Calu3 (cell line): ENCODE measurements at regions of chr12 and their contacts with region 1.

Region 1: DNA sequence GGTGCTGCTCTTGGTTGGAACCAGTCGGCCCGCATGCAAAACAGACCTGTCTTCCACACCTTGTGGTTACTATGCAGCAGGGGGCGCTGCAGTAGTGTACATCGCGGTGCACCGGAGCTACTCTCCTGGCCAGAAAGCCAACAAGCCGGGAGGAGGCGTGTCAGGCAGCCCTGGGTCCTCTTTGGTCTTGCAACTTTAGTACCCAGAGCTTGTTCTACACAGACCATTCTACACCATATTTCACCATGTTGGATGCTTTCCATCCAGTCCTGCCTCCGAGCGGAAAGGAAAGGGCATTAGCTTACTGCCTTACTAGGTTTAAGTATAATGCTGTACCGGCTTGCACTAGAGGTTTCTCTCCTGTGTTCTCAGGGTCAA is 927 bp upstream of the TMTC2 start:
- DNase-seq: peak; percentile 97
- H3K4me3 Mint-ChIP-seq: peak overlapping the region; percentile 89
- H3K27ac Mint-ChIP-seq: peak overlapping the region; percentile 97
- H3K4me1 Mint-ChIP-seq: peaks cover 51% of the 10 kb centered on the region
- H3K27me3 Mint-ChIP-seq: no peaks in the 10 kb centered on the region
- CTCF ChIP-seq: peak; percentile 82

Region 2: GRCh38 chr12:82527165-82527780 is 158.5 kb before region 1 on chr12:
- CTCF ChIA-PET with region 1: interaction called, 9 read pairs
- intact Hi-C with region 1: loop called (anchors 1 kb)
- DNase-seq: peak; percentile 62
- H3K4me3 Mint-ChIP-seq: no peak overlapping the region
- H3K27ac Mint-ChIP-seq: no peak overlapping the region
- H3K4me1 Mint-ChIP-seq: peaks cover 18% of the 10 kb centered on the region
- H3K27me3 Mint-ChIP-seq: no peaks in the 10 kb centered on the region
- CTCF ChIP-seq: peak; percentile 36

Region 3: DNA sequence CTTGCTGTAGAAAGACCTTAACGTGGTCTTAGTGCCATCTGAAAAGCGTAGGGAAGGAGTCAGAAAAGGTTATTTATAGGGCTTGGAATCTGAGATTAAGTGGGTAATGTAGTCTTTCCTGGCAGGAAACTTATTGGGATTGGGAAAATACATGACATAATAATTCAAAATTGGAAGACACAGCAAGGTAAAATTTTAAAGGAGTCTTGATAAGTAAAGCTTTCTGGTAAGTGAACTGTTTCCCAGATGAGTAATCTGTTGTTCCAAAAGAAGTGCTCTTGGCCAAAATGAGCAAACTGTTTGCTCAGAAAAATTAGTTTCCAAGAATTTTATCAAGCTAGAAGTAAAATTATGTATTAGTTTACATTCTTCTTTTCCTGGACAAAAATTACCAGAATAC is 148.3 kb before region 1 on chr12:
- CTCF ChIA-PET with region 1: no interaction called
- intact Hi-C with region 1: no loop called
- DNase-seq: no peak
- H3K4me3 Mint-ChIP-seq: no peak overlapping the region
- H3K27ac Mint-ChIP-seq: no peak overlapping the region
- H3K4me1 Mint-ChIP-seq: no peaks in the 10 kb centered on the region
- H3K27me3 Mint-ChIP-seq: no peaks in the 10 kb centered on the region
- CTCF ChIP-seq: no peak

Region 4: DNA sequence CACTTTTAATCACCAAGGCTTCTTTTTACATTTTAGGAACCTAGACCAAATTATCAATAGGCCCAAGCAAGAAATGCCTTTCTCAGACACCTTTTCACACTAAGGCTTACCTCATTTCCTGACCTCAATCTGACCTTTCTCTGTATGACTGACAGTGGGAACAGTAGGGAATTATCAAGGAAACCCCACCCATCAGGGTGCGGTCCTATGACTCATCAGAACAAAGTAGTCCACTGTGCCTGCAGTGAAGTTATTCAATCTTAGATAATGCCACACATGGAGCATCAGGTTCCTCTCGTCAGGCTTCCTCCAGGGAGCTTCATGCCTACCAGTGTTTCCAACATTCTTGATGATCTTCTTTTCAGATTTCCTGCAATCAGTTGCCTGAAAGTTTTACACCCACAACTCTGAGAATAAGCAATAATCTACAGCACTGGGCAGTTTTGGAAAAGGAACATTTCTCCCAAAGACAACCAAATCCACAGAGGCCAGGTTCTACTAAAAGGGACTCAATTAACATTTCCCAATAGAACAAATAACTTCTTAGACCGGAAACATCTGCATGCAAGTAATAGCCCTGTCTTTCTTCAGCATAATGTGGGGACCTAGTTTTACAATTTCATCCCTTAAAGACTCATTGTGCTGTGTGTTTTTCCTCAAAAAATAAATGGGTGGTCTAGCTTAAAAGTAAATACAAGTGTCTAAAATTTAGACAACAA is 35.0 kb before region 1 on chr12:
- CTCF ChIA-PET with region 1: interaction called, 27 read pairs
- intact Hi-C with region 1: loop called (anchors 1 kb)
- DNase-seq: peak; percentile 91
- H3K4me3 Mint-ChIP-seq: peak overlapping the region; percentile 47
- H3K27ac Mint-ChIP-seq: peak overlapping the region; percentile 98
- H3K4me1 Mint-ChIP-seq: peaks cover 43% of the 10 kb centered on the region
- H3K27me3 Mint-ChIP-seq: no peaks in the 10 kb centered on the region
- CTCF ChIP-seq: no peak

Region 5: GRCh38 chr12:82912406-82912805 is 226.6 kb after region 1 on chr12:
- CTCF ChIA-PET with region 1: no interaction called
- intact Hi-C with region 1: no loop called
- DNase-seq: no peak
- H3K4me3 Mint-ChIP-seq: no peak overlapping the region
- H3K27ac Mint-ChIP-seq: no peak overlapping the region
- H3K4me1 Mint-ChIP-seq: no peaks in the 10 kb centered on the region
- H3K27me3 Mint-ChIP-seq: no peaks in the 10 kb centered on the region
- CTCF ChIP-seq: no peak

Region 6: GRCh38 chr12:82931349-82932114 is 245.8 kb after region 1 on chr12:
- CTCF ChIA-PET with region 1: no interaction called
- intact Hi-C with region 1: no loop called
- DNase-seq: no peak
- H3K4me3 Mint-ChIP-seq: no peak overlapping the region
- H3K27ac Mint-ChIP-seq: no peak overlapping the region
- H3K4me1 Mint-ChIP-seq: peaks cover 10% of the 10 kb centered on the region
- H3K27me3 Mint-ChIP-seq: no peaks in the 10 kb centered on the region
- CTCF ChIP-seq: no peak

Region 7: GRCh38 chr12:83161456-83161855 is 475.7 kb after region 1 on chr12:
- CTCF ChIA-PET with region 1: no interaction called
- intact Hi-C with region 1: no loop called
- DNase-seq: no peak
- H3K4me3 Mint-ChIP-seq: no peak overlapping the region
- H3K27ac Mint-ChIP-seq: no peak overlapping the region
- H3K4me1 Mint-ChIP-seq: peaks cover 13% of the 10 kb centered on the region
- H3K27me3 Mint-ChIP-seq: no peaks in the 10 kb centered on the region
- CTCF ChIP-seq: no peak

Region 8: GRCh38 chr12:83172866-83173649 is 487.3 kb after region 1 on chr12:
- CTCF ChIA-PET with region 1: no interaction called
- intact Hi-C with region 1: loop called (anchors 10 kb)
- DNase-seq: no peak
- H3K4me3 Mint-ChIP-seq: no peak overlapping the region
- H3K27ac Mint-ChIP-seq: no peak overlapping the region
- H3K4me1 Mint-ChIP-seq: no peaks in the 10 kb centered on the region
- H3K27me3 Mint-ChIP-seq: no peaks in the 10 kb centered on the region
- CTCF ChIP-seq: no peak

Region 9: GRCh38 chr12:83365317-83365716 is 679.5 kb after region 1 on chr12:
- CTCF ChIA-PET with region 1: no interaction called
- intact Hi-C with region 1: loop called (anchors 10 kb)
- DNase-seq: peak; percentile 4
- H3K4me3 Mint-ChIP-seq: peak overlapping the region; percentile 36
- H3K27ac Mint-ChIP-seq: peak overlapping the region; percentile 60
- H3K4me1 Mint-ChIP-seq: peaks cover 12% of the 10 kb centered on the region
- H3K27me3 Mint-ChIP-seq: no peaks in the 10 kb centered on the region
- CTCF ChIP-seq: no peak

Region 10: DNA sequence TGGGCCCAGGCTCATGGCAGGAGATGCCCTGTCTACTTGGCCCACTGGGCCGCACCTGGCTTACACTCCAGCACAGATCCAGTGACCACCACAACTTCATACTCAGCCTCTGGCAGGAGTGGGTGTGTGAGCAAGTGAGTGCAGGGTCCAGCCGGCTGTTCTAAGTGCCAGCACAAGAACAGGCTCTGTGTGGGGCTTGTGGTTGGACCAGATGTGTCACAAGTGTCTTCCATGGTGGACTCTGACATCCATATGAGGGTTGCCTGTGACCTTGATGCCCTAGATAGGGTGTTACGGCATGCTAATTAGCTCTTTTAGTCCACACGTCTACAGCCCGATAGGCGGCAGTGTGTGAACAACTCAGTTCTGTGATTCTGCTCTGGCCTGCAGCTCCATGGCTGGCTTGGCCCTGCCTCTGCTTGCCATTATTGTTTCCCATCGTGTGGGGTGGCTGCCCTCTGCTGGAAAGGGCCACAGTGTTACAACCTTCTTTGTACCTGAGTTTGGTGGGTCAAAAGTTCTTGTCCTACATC is 1137.7 kb after region 1 on chr12:
- CTCF ChIA-PET with region 1: interaction called, 8 read pairs
- intact Hi-C with region 1: loop called (anchors 5 kb)
- DNase-seq: peak; percentile 66
- H3K4me3 Mint-ChIP-seq: no peak overlapping the region
- H3K27ac Mint-ChIP-seq: no peak overlapping the region
- H3K4me1 Mint-ChIP-seq: peaks cover 28% of the 10 kb centered on the region
- H3K27me3 Mint-ChIP-seq: no peaks in the 10 kb centered on the region
- CTCF ChIP-seq: no peak

Region 11: GRCh38 chr12:84502907-84503787 is 1817.4 kb after region 1 on chr12:
- CTCF ChIA-PET with region 1: interaction called, 8 read pairs
- intact Hi-C with region 1: loop called (anchors 2 kb)
- DNase-seq: peak; percentile 63
- H3K4me3 Mint-ChIP-seq: no peak overlapping the region
- H3K27ac Mint-ChIP-seq: no peak overlapping the region
- H3K4me1 Mint-ChIP-seq: peaks cover 21% of the 10 kb centered on the region
- H3K27me3 Mint-ChIP-seq: no peaks in the 10 kb centered on the region
- CTCF ChIP-seq: peak; percentile 62